A549 (cell line): ENCODE measurements at regions of chr5 and their contacts with region 1.

Region 1: DNA sequence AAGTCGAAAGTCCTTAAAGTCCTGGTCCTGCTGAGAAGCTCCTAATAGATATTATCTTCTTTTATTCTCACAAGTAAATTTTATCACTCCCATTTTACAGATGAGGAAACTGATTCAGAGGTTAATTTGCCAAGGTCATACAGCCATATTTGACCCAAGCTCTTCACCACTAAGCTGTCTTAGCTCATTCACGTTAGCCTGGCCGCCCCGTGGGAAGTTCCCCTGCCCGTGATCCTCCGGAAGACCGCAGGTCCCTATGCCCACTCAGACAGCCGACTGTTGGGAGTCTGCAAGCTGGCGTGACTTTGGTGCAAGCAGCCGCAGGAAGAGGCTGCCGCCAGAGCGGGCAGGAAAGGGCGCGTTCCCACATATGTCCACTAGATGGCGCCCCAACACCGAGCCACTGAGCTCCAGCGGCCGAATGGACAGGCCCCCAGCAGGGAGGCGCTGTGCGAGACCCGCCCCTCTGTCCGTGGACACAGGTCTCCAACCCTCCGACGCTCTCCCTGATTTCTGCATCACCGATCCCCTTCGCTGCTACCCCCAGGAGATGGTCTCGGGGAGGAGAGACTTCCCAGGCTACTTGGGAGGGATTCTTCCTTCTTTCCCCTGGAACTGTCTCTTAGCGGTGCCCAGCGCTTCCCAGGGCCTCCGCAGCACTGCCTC is 10.0 kb upstream of the ARAP3 start:
- DNase-seq: peak; percentile 71 to 74
- ATAC-seq: peak; percentile 91 to 96
- H3K4me3 ChIP-seq: peak overlapping the region; percentile 38
- H3K27ac ChIP-seq: peak overlapping the region in 1 of 2 experiments; percentile 57; a peak in 2 of 6 replicates
- H3K4me1 ChIP-seq: peaks cover 2% of the 10 kb centered on the region; the same call in 1 of the 3 replicates
- CTCF ChIP-seq: peak; percentile 98
- EP300 ChIP-seq: no peak
- POLR2A ChIP-seq: no peak
- RAD21 ChIP-seq: peak; percentile 95 to 99

Region 2: GRCh38 chr5:141471290-141471689 is 220.7 kb before region 1 on chr5:
- CTCF ChIA-PET with region 1: no interaction called
- POLR2A ChIA-PET with region 1: no interaction called
- DNase-seq: no peak
- ATAC-seq: no peak
- H3K4me3 ChIP-seq: no peak overlapping the region
- H3K27ac ChIP-seq: no peak overlapping the region
- H3K4me1 ChIP-seq: no peaks in the 10 kb centered on the region
- CTCF ChIP-seq: no peak
- EP300 ChIP-seq: no peak
- POLR2A ChIP-seq: no peak
- RAD21 ChIP-seq: no peak

Region 3: GRCh38 chr5:141557681-141558136 is 134.3 kb before region 1 on chr5:
- CTCF ChIA-PET with region 1: no interaction called
- POLR2A ChIA-PET with region 1: no interaction called
- DNase-seq: peak; percentile 31 to 83
- ATAC-seq: peak; percentile 84 to 91
- H3K4me3 ChIP-seq: no peak overlapping the region
- H3K27ac ChIP-seq: peak overlapping the region in 1 of 2 experiments; percentile 65; a peak in 2 of 6 replicates
- H3K4me1 ChIP-seq: no peaks in the 10 kb centered on the region
- CTCF ChIP-seq: peak; percentile 78
- EP300 ChIP-seq: no peak
- POLR2A ChIP-seq: no peak
- RAD21 ChIP-seq: peak; percentile 81 to 85

Region 4: DNA sequence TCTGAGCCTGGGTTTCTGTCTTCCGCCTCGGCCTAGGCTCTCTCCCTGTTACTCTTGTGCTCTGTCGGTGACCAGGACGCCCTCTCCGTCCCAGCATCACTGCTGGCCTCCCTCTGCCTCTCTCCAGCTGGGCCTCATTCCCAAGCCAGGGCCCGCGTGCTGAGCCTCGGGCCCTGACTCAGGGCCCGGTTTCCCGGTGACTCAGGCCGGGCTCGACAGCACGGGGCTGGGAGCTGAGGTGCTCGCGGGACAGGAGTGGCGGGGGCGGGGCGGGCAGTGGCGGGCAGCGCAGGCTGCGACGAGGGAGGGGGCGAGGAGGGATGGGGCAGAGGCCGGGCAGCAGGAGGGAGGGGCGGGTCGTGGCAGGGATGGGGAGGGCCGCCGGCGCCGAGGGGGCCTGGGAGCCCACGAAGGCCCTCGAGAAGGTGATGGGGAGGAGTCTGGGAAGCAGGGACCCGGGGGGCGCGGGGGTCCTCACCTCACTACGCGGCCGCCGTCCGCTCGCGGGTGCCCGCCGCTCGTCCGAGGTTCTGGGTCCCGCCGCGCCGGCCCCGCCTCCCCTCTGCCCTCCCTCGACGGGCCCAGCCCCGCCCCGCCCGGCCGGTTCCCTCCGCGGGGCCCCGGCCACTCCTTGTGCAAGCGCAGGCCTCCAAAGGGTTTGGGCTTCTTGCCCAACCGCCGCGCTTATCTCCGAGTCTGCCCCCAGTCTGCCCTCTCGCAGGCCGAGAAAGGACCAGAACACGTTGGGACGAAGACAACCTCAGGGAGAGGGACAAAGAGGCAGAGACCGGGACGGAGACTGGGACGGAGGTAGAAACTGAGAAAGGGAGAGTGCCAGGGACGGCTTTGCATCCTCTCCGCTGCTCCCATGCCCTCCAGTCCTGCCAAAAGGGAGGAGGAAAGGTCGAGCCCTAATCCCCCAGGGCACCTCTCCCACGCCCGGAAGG is 10.0 kb before region 1 on chr5 and contains the start of gene ARAP3:
- CTCF ChIA-PET with region 1: interaction called, 63 read pairs
- POLR2A ChIA-PET with region 1: no interaction called
- DNase-seq: peak; percentile 69 to 75
- ATAC-seq: peak; percentile 87 to 93
- H3K4me3 ChIP-seq: peak within 1 kb of the TSS; percentile 49
- H3K27ac ChIP-seq: peak within 1 kb of the TSS; percentile 88 to 98
- H3K4me1 ChIP-seq: peaks cover 24% of the 10 kb centered on the region
- CTCF ChIP-seq: no peak
- EP300 ChIP-seq: no peak
- POLR2A ChIP-seq: peak; percentile 40
- RAD21 ChIP-seq: no peak
- polyA plus RNA-seq, gene ARAP3: 3.0 and 4.5 TPM in 2 replicates

Region 5: GRCh38 chr5:141811287-141812155 is 119.5 kb after region 1 on chr5:
- CTCF ChIA-PET with region 1: interaction called, 25 read pairs
- POLR2A ChIA-PET with region 1: no interaction called
- DNase-seq: peak in 1 of 2 experiments; percentile 62
- ATAC-seq: peak; percentile 44 to 74; a peak in 4 of 6 replicates
- H3K4me3 ChIP-seq: no peak overlapping the region
- H3K27ac ChIP-seq: no peak overlapping the region
- H3K4me1 ChIP-seq: no peaks in the 10 kb centered on the region
- CTCF ChIP-seq: peak; percentile 41
- EP300 ChIP-seq: no peak
- POLR2A ChIP-seq: no peak
- RAD21 ChIP-seq: 0 out of 5 replicates have a peak, but pooled peaks of 1 of the 2 experiments have one; percentile 11

Region 6: DNA sequence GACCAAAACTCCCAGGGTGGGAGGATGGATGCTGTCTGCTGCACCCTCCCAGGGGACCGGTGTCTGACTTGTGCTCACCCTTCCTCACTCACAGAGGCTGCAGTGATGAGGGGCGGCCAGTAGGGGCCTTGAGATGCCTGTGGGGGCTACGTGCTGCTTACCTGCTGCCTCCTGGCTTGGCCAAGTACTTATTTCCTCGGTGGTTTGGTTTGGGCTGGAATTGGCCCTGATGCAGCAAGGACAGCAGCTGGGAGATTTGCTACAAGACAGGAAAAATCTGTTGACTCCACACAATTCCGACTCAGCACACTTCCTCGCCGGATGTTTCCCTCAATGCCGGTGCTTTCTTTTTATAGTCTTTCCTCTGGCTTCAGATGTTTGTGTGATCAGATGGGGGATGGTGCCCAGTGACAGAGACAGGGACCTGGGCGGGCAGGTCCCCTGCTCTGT is 259.4 kb after region 1 on chr5:
- CTCF ChIA-PET with region 1: interaction called, 325 read pairs
- POLR2A ChIA-PET with region 1: no interaction called
- DNase-seq: peak in 1 of 2 experiments; percentile 51
- ATAC-seq: peak; percentile 62 to 85; a peak in 3 of 6 replicates
- H3K4me3 ChIP-seq: no peak overlapping the region
- H3K27ac ChIP-seq: no peak overlapping the region
- H3K4me1 ChIP-seq: no peaks in the 10 kb centered on the region
- CTCF ChIP-seq: no peak
- EP300 ChIP-seq: no peak
- POLR2A ChIP-seq: no peak
- RAD21 ChIP-seq: no peak

Region 7: GRCh38 chr5:142012792-142013388 is 320.9 kb after region 1 on chr5 and contains the start of gene GNPDA1:
- CTCF ChIA-PET with region 1: interaction called, 10 read pairs
- POLR2A ChIA-PET with region 1: no interaction called
- DNase-seq: peak; percentile 70 to 88
- ATAC-seq: peak; percentile 84 to 86
- H3K4me3 ChIP-seq: peak within 1 kb of the TSS; percentile 89
- H3K27ac ChIP-seq: peak within 1 kb of the TSS; percentile 94 to 95
- H3K4me1 ChIP-seq: peaks cover 39% of the 10 kb centered on the region
- CTCF ChIP-seq: no peak
- EP300 ChIP-seq: no peak
- POLR2A ChIP-seq: peak; percentile 82
- RAD21 ChIP-seq: no peak
- polyA plus RNA-seq, gene GNPDA1: 17.1 and 31.0 TPM in 2 replicates